ENCODE measurements at regions of chr19 and their contacts with region 1.

Region 1: GRCh38 chr19:58059003-58059670 is at the start of gene ZNF135:
- DNase-seq: peak; percentile 86
- ATAC-seq: peak; percentile 92
- H3K4me3 Mint-ChIP-seq: peak within 1 kb of the TSS; percentile 82
- H3K27ac Mint-ChIP-seq: peak within 1 kb of the TSS; percentile 89
- H3K4me1 Mint-ChIP-seq: peaks cover 3% of the 10 kb centered on the region
- H3K27me3 Mint-ChIP-seq: peaks cover 2% of the 10 kb centered on the region
- total RNA-seq, gene ZNF135: 3.8 TPM

Region 2: DNA sequence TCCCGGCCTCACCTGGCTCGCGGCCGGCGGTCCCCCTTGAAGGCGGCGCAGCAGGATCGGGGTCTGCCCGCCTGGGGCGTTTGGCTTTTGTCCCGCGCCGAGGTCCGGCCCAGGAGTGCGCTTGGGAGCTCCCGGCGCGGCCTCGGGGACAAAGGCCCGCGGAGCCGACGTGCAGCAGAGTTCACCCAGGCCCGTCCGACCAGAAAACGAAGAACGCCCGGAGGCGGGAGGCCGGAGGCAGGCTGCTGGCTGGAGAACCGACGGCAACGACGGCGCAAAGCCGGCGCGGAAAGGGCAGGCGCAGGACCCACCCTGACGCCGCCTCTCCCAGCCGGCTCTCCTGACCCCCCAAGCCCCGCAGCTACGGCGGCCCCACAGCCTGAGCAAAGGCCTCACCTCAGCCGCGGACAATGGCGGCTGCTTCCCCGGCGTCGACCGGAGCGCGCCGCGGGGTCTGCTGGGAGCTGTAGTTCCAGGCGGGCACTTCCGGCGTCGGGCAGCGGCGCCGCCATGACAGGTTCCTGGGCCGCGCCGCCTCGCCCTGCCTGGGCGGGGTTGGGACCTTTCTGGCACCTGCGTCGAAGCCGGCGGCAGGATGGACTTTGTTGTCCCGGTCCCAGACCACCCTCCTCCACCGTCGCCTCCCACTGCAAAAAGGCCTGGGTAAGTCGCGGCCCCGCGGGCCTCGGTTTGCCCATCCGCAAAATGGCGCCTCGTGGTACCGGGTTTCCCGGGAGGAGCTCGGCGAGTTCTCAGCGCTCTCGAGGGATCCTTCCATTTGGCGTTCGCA is 56.6 kb before region 1 on chr19 and contains the start of gene ZNF606:
- POLR2A ChIA-PET with region 1: interaction called, 31 read pairs
- DNase-seq: peak; percentile 91
- ATAC-seq: peak; percentile 95
- H3K4me3 Mint-ChIP-seq: peak within 1 kb of the TSS; percentile 83
- H3K27ac Mint-ChIP-seq: peak within 1 kb of the TSS; percentile 84
- H3K4me1 Mint-ChIP-seq: peaks cover 21% of the 10 kb centered on the region
- H3K27me3 Mint-ChIP-seq: no peaks in the 10 kb centered on the region
- total RNA-seq, gene ZNF606: 21.3 to 22.2 TPM

Region 3: GRCh38 chr19:58033741-58034471 is 25.2 kb before region 1 on chr19 and contains the start of gene ZSCAN1:
- POLR2A ChIA-PET with region 1: no interaction called
- DNase-seq: peak; percentile 72
- ATAC-seq: peak; percentile 77
- H3K4me3 Mint-ChIP-seq: peak within 1 kb of the TSS; percentile 50
- H3K27ac Mint-ChIP-seq: peak within 1 kb of the TSS; percentile 80
- H3K4me1 Mint-ChIP-seq: peaks cover 4% of the 10 kb centered on the region
- H3K27me3 Mint-ChIP-seq: peaks cover 11% of the 10 kb centered on the region
- total RNA-seq, gene ZSCAN1: not detected

Region 4: GRCh38 chr19:58097781-58098681 is 38.9 kb after region 1 on chr19 and contains the start of gene ZSCAN18:
- POLR2A ChIA-PET with region 1: interaction called, 14 read pairs
- DNase-seq: peak; percentile 97
- ATAC-seq: peak; percentile 97
- H3K4me3 Mint-ChIP-seq: peak within 1 kb of the TSS; percentile 83
- H3K27ac Mint-ChIP-seq: peak within 1 kb of the TSS; percentile 93
- H3K4me1 Mint-ChIP-seq: peaks cover 9% of the 10 kb centered on the region
- H3K27me3 Mint-ChIP-seq: no peaks in the 10 kb centered on the region
- total RNA-seq, gene ZSCAN18: 56.6 to 58.1 TPM